ENCODE measurements at regions of chr9 and their contacts with region 1.

Region 1: DNA sequence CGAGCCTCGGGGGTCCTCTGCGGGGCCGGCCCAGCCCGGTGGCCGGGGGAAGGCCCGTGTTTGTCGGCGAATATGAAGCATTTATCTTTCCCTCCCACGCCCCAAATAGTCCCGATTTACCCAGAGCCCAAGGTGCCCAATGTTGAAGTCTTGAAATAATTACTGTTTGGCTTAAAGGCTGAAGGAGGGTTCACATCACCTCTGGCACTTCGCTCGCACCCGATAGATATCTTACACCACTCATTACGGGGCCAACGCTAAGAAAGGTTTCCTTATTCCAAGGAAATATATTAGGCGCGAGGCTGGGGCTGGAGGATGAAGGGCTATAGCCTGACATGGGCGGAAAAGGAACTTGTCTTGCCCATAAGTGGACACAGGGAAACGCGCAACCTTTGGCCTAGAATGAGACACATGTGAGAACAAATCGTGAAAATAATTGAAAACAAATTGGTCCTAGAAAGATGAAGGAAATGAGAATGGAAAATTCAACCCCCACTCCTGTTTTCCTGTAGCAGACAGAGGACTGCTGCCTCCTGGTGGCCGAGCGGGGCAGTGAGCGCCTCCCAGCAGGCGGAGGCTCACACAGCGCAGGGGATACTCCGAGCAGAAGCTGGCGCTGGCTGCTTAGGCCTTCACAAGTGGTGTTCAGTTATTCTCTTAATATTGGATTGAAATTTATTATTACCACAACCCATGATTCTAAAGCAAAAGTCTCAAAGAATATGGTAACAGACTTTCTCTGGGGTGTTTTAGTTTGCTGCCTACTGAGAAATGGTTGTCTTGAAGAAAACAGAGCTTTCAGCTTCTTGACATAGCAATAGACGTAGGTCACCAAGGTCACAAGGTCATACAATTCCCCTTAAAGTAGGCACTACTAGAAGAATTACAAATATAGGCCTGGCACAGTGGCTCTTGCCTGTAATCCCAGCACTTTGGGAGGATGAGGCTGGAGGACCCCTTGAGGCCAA is 7.9 kb downstream of the CCL21 start:
- DNase-seq: peak; percentile 91
- ATAC-seq: peak; percentile 85
- H3K4me3 Mint-ChIP-seq: peak overlapping the region; percentile 72
- H3K27ac Mint-ChIP-seq: peak overlapping the region; percentile 58
- H3K4me1 Mint-ChIP-seq: peaks cover 7% of the 10 kb centered on the region
- H3K27me3 Mint-ChIP-seq: peaks cover 8% of the 10 kb centered on the region

Region 2: DNA sequence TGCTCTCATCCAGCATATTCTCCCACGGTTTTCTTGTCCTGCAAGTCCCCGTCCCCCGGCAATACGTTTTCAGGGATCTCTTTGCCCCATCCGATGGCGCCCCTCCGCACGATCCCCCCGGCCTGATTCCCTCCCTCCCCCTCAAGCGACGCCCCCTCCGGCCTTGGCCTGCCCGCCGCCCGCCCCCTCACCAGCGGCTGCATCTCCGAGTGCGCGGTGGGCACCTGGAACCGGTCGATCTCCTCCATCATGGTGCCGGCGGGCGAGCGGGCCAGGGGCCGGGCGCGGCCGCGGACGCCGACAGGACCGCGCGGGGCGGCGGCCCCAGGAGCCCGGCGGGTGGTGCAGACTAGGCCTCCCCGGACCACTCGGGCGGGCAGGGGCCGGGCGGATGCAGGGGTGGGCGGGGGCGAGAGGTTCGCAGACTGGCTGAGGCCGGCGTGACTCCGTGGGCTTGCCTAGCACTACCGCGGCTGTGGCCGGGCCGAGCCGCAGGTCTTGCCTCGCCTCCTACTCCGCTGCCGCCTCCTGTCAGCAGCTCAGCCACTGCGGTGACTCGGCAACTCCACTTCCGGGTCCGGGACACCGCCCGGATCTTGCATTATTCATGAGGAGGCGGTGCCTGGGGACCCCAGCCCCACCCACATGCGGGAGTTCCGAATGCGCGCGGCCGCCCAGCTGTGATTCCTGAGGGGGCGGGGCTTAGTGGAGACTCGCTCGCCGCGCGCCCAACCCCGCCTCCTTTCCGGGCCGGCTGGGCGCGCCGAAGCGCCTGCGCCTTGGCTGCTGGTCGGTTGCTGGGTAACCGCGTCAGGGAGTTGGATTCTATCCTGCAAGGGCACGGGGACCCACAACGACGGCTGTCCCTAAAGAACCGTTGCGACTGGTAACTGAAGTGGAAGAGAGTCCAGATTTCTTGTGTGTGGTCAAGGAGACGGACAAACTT is 243.8 kb before region 1 on chr9 and contains the starts of genes DNAI1 and FAM219A:
- CTCF ChIA-PET with region 1: no interaction called
- POLR2A ChIA-PET with region 1: no interaction called
- intact Hi-C with region 1: no loop called
- DNase-seq: peak; percentile 99
- ATAC-seq: peak; percentile 92
- H3K4me3 Mint-ChIP-seq: peak within 1 kb of the TSS; percentile 84
- H3K27ac Mint-ChIP-seq: peak within 1 kb of the TSS; percentile 75
- H3K4me1 Mint-ChIP-seq: peaks cover 45% of the 10 kb centered on the region
- H3K27me3 Mint-ChIP-seq: peaks cover 9% of the 10 kb centered on the region
- total RNA-seq, gene DNAI1: 0.34 TPM in 1 of 2 experiments, not detected in the other
- total RNA-seq, gene FAM219A: 9.7 to 12.9 TPM

Region 3: DNA sequence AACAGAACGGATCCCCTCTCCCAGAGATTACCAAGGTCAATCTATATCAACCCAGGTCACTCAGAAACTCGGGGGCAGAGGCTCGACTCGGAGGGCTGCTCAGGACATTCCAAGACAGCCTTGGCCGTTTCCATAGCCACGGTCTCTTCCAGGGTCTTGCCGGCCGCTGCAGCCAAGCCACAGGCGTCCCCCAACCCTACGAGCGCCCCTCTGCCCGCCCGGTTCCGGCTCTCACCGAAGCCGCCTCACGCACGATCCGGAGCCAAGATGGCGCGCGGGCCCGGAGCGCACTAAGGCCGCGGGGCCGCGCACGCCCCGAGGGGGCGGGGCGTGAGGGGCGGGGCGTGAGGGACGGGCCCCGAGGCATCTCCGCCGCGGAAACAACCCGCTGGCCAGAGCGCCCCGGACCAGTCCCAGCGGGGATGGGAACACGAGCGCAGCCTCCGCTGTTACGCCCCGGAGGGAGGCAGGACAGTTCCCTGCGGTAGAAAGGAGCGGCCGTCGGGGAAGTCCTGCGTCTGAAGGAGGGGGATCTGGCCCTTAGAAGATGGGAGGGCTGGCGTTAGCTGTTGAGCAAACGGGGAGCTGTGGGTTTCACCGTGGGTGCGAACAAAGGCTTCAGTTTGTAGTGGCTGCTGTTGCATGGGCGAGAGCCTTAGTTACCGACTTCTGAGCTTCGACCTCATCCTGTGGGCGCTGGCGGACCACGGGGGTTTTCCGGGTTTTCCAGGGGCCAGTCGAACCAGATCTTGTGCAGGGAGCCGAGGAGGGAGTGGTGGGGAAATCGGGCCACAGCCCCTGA is 90.0 kb before region 1 on chr9 and contains the start of gene RPP25L:
- CTCF ChIA-PET with region 1: interaction called, 11 read pairs
- POLR2A ChIA-PET with region 1: no interaction called
- intact Hi-C with region 1: loop called (anchors 1 to 5 kb)
- DNase-seq: peak; percentile 91
- ATAC-seq: peak; percentile 97
- H3K4me3 Mint-ChIP-seq: peak within 1 kb of the TSS; percentile 86
- H3K27ac Mint-ChIP-seq: peak within 1 kb of the TSS; percentile 93
- H3K4me1 Mint-ChIP-seq: peaks cover 16% of the 10 kb centered on the region
- H3K27me3 Mint-ChIP-seq: no peaks in the 10 kb centered on the region
- total RNA-seq, gene RPP25L: 29.3 to 35.2 TPM

Region 4: GRCh38 chr9:34646211-34647083 is 55.6 kb before region 1 on chr9 and contains the start of gene GALT:
- CTCF ChIA-PET with region 1: interaction called, 7 read pairs
- POLR2A ChIA-PET with region 1: no interaction called
- intact Hi-C with region 1: loop called in 1 of 2 experiments (anchors 2 kb)
- DNase-seq: peak; percentile 99
- ATAC-seq: peak; percentile 90
- H3K4me3 Mint-ChIP-seq: peak within 1 kb of the TSS; percentile 91
- H3K27ac Mint-ChIP-seq: peak within 1 kb of the TSS; percentile 89
- H3K4me1 Mint-ChIP-seq: peaks cover 26% of the 10 kb centered on the region
- H3K27me3 Mint-ChIP-seq: no peaks in the 10 kb centered on the region
- total RNA-seq, gene GALT: 45.1 to 53.9 TPM

Region 5: DNA sequence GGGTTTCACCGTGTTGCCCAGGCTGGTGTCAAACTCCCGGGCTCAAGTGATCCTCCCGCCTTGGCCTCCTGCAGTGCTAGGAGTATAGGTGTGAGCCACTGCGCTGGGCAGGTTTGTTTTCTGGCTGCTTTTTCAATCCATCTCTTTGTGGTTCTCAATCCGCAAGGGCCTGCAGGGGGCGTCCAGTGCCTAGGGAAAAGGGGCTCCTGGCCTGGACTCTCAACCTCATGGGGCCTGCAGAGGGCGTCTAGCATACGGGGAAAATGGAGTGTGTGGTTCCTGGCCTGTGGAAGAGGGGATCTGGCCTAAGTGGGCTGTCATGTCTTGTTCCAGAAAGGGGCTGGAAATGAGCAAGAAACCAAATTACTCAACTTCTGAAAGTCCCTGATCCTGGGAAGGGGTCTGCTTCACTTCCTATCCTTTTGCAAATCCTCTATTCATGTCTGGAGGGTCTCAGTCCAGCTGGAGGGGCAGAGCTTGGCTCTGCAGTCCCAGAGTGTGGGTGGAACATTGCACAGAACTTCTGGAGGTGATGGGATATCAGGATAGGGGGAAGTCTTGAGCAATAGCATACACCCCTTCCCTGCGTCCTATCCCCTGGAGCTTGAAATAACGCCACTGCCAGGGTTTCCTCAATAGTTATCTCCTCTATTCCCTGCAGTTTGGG is 26.9 kb before region 1 on chr9:
- CTCF ChIA-PET with region 1: interaction called, 15 read pairs
- POLR2A ChIA-PET with region 1: no interaction called
- intact Hi-C with region 1: loop called (anchors 1 kb)
- DNase-seq: peak; percentile 81
- ATAC-seq: peak; percentile 80
- H3K4me3 Mint-ChIP-seq: no peak overlapping the region
- H3K27ac Mint-ChIP-seq: no peak overlapping the region
- H3K4me1 Mint-ChIP-seq: peaks cover 2% of the 10 kb centered on the region
- H3K27me3 Mint-ChIP-seq: no peaks in the 10 kb centered on the region

Region 6: DNA sequence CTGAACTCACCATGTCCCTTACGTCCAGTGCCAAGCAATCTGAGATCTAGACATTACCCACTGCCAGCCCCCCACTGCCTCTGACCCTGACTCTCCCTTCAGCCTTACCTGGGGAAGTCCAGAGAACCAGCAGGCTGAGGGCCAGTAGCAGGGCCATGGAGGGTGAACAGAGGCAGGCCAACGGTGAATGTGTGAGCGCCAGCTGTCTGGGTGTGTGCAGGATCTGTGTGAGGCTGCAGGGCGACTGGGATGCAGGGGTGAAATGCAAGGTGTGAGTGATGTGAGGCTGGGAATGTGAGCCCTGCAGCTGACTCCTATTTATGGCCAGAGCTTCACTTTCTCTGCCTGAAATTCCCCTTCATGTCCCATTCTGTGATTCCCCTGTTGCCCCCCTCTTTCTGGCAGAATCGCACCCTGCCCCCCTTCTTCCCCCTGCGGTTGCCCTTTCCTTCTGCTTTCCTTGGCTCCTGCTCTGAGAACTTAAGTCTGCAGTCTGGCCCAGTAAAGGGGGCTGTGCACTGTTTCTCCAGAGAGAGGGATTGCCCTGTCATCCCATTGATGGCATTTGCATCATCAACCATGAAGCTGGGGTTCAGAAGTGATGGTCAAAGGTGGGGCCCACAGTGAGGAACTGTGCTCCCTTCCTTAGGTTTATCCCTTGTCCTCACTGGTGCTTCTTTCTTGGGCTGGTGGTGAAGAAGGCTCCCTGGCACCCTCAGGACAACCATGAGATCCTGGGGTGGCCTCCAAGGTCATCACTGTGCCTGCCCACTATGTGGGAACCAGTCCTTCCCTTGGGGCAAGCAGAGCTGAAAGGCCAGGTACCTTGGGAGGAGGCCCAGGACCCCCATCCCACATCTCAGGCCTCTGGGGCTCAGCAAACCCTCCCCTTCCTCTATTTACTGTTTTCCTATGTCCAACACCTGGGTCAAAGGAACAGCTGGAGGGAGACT is 10.8 kb before region 1 on chr9 and contains the start of gene CCL19:
- CTCF ChIA-PET with region 1: interaction called, 26 read pairs
- POLR2A ChIA-PET with region 1: no interaction called
- intact Hi-C with region 1: no loop called
- DNase-seq: no peak
- ATAC-seq: no peak
- H3K4me3 Mint-ChIP-seq: no peak within 1 kb of the TSS
- H3K27ac Mint-ChIP-seq: no peak within 1 kb of the TSS
- H3K4me1 Mint-ChIP-seq: no peaks in the 10 kb centered on the region
- H3K27me3 Mint-ChIP-seq: no peaks in the 10 kb centered on the region
- total RNA-seq, gene CCL19: 0.30 to 0.66 TPM

Region 7: GRCh38 chr9:35096035-35096849 is 394.2 kb after region 1 on chr9 and contains the start of gene PIGO:
- CTCF ChIA-PET with region 1: no interaction called
- POLR2A ChIA-PET with region 1: no interaction called
- intact Hi-C with region 1: loop called in 1 of 2 experiments (anchors 1 kb)
- DNase-seq: peak; percentile 95
- ATAC-seq: peak; percentile 91
- H3K4me3 Mint-ChIP-seq: peak within 1 kb of the TSS; percentile 85
- H3K27ac Mint-ChIP-seq: peak within 1 kb of the TSS; percentile 92
- H3K4me1 Mint-ChIP-seq: peaks cover 25% of the 10 kb centered on the region
- H3K27me3 Mint-ChIP-seq: no peaks in the 10 kb centered on the region
- total RNA-seq, gene PIGO: 21.0 to 27.2 TPM

Measured in activated CD4-positive, alpha-beta T cell treated with anti-CD3 and anti-CD28 coated beads for 36 hours (primary cell).